IMR-90 (cell line): ENCODE measurements at regions of chr15 and their contacts with region 1.

Region 1: DNA sequence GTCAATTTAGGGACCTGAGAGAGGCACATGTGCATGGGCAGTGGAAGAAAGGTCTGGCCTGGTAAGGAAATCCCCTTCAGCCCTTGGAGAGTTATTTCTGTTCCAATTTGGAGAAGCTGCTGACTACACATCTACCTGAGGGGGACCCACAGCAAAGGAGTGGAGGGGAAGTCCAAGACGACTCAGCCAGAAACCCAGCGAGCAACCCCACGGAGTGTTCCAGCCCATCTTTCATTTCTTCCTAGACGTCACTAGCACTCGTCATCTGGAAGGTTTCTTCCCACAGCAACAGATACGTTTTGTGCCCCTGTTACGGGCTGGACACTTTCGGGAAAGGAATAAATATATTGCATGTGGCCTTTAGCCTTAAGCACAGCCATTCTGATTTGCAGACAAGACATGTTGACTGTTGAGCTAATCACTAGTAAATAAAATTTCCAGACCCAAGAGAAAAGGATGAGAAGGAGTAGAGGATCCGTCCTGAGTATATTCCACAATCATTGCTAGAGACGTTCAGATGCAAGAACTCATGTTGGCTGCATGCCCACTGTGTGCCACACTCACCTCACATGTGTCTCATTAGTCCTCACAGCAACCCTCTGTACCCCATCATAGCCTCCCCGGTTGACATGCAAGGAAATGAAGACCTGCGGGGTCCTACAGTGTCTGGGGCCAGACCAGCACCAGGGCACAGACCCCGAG is 7.8 kb upstream of the FAM174B start:
- DNase-seq: no peak
- ATAC-seq: no peak
- H3K4me3 ChIP-seq: no peak overlapping the region
- H3K27ac ChIP-seq: no peak overlapping the region
- H3K4me1 ChIP-seq: peaks cover 4% of the 10 kb centered on the region; the same call in 1 of the 2 replicates
- H3K27me3 ChIP-seq: peaks cover 2% of the 10 kb centered on the region; the same call in 1 of the 2 replicates
- CTCF ChIP-seq: no peak
- POLR2A ChIP-seq: no peak
- RAD21 ChIP-seq: no peak

Region 2: GRCh38 chr15:92681141-92681631 is 17.8 kb after region 1 on chr15:
- CTCF ChIA-PET with region 1: interaction called, 3 read pairs
- POLR2A ChIA-PET with region 1: no interaction called
- dilution Hi-C with region 1: no loop called
- in situ Hi-C with region 1: no loop called
- intact Hi-C with region 1: loop called (anchors 2 kb)
- DNase-seq: peak; percentile 56
- ATAC-seq: peak; percentile 83
- H3K4me3 ChIP-seq: no peak overlapping the region
- H3K27ac ChIP-seq: no peak overlapping the region
- H3K4me1 ChIP-seq: peaks cover 1% of the 10 kb centered on the region; the same call in 1 of the 2 replicates
- H3K27me3 ChIP-seq: peaks cover 3% of the 10 kb centered on the region; the same call in 1 of the 2 replicates
- CTCF ChIP-seq: no peak
- POLR2A ChIP-seq: no peak
- RAD21 ChIP-seq: no peak

Region 3: DNA sequence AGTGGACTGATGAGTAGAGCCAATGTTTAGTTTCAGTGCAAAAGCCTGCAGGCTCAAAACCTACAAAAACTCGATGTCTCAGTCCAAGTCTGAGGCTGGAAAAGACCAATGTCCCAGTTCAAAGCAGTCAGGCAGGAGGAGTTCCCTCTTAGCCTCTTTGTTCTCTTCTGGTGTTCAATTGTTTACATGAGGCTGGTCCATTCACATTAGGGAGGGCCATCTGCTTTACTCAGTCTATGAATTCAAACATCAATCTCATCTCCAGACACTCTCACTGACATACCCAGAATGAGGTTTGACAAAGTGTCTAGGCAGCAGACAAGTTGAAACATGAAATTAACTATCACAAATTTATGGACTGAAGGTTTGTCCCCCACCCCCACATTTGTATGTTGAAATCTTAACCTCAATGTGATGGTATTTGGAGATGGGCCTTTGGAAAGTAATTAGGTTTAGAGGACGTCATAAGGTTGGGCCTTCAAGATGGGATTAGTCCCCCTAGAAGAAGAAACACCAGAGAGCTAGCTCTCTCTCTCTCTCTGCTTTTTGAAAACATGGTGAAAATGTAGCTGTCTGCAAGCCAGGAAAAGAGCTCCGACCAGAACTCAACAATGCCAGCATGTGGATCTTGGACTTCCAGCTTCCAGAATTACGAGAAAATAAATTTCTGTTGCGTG is 864.1 kb after region 1 on chr15:
- CTCF ChIA-PET with region 1: no interaction called
- POLR2A ChIA-PET with region 1: no interaction called
- dilution Hi-C with region 1: no loop called
- in situ Hi-C with region 1: no loop called
- intact Hi-C with region 1: loop called (anchors 5 kb)
- DNase-seq: no peak
- ATAC-seq: no peak
- H3K4me3 ChIP-seq: no peak overlapping the region
- H3K27ac ChIP-seq: no peak overlapping the region
- H3K4me1 ChIP-seq: no peaks in the 10 kb centered on the region
- H3K27me3 ChIP-seq: no peaks in the 10 kb centered on the region
- CTCF ChIP-seq: no peak
- POLR2A ChIP-seq: no peak
- RAD21 ChIP-seq: no peak